Dendritic cell treated with granulocyte-macrophage colony-stimulating factor and Interleukin-4, amounts not matched to agents 40 ng/mL and 50 ng/mL, for 4 days (primary cell): ENCODE measurements at regions of chr11 and their contacts with region 1.

Region 1: DNA sequence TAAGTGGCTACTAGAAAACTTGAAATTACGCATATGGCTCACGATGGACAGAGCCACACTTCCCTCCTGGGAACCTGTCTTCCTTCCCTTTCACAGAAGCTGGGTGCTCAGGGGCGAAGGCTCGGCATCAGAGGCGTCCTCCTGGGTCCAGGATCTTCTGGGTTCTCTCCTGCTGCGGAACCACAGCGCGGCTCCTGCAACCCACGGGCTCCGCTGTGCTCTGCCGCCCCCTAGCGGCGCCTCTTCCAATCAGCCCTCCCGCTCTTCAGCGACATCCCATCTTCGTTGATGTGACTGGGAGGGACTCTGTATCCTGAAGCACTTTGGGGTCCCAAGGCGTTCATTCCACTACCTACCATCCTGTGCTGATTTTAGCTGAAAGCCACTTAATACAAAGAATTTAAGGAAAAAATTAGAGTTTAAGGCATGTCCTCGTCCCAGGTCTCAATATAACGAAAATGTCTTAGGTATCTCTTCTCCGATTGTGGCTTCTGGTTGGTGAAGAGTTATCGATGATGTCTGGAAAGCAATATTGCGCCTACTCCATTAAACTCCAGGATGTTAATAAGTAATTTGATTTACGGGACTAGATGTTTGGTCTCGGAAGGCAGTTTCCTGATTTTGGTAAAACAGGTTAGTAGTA is 14.8 kb upstream of the RPS3 start:
- H3K4me3 Mint-ChIP-seq: peak overlapping the region; percentile 55
- H3K27ac Mint-ChIP-seq: no peak overlapping the region
- H3K4me1 Mint-ChIP-seq: peaks cover 30% of the 10 kb centered on the region
- H3K27me3 Mint-ChIP-seq: peaks cover 2% of the 10 kb centered on the region

Region 2: GRCh38 chr11:75280227-75280701 is 104.3 kb before region 1 on chr11:
- intact Hi-C with region 1: loop called (anchors 1 kb)
- H3K4me3 Mint-ChIP-seq: no peak overlapping the region
- H3K27ac Mint-ChIP-seq: no peak overlapping the region
- H3K4me1 Mint-ChIP-seq: peaks cover 39% of the 10 kb centered on the region
- H3K27me3 Mint-ChIP-seq: no peaks in the 10 kb centered on the region

Region 3: DNA sequence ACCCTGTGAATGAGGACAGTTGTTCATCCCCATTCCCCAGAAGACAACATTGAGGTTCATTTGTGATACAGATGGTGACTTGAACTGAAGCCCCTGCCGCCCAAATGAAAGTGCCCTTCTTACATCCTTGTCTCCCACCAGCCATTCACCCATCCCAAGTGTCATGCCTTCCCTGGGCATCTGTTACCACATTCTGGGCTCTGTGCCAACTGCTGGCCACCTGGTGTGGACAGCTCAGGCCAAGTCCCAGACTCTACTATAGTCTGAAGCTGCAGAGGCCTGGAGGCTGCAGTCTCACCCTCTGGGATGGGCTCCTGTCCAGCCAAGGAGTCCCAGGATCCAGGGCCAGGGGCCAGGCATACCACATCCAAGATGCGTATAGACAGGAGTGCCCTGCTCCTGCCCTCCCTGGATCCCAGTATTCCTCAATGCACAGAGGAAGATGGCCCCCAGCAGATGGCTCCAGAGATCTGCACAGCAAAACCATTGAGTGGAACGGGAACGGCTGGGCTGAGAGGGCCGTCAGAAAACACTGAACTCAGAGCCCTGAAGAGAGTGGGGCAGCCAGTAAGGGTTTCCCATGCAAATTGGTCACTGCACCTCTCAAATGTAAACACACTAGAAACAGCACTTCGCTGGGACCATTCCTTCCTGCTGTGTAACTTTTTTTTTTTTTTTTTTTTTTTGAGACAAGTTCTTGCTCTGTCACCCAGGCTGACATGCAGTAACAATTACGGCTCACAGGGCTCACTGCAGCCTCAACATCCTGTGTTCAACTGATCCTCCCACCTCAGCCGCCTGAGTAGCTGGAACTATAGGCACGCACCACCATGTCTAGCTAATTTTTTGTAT is 55.9 kb before region 1 on chr11:
- intact Hi-C with region 1: loop called (anchors 1 kb)
- H3K4me3 Mint-ChIP-seq: peak overlapping the region; percentile 6
- H3K27ac Mint-ChIP-seq: peak overlapping the region; percentile 50
- H3K4me1 Mint-ChIP-seq: peaks cover 69% of the 10 kb centered on the region
- H3K27me3 Mint-ChIP-seq: no peaks in the 10 kb centered on the region

Region 4: DNA sequence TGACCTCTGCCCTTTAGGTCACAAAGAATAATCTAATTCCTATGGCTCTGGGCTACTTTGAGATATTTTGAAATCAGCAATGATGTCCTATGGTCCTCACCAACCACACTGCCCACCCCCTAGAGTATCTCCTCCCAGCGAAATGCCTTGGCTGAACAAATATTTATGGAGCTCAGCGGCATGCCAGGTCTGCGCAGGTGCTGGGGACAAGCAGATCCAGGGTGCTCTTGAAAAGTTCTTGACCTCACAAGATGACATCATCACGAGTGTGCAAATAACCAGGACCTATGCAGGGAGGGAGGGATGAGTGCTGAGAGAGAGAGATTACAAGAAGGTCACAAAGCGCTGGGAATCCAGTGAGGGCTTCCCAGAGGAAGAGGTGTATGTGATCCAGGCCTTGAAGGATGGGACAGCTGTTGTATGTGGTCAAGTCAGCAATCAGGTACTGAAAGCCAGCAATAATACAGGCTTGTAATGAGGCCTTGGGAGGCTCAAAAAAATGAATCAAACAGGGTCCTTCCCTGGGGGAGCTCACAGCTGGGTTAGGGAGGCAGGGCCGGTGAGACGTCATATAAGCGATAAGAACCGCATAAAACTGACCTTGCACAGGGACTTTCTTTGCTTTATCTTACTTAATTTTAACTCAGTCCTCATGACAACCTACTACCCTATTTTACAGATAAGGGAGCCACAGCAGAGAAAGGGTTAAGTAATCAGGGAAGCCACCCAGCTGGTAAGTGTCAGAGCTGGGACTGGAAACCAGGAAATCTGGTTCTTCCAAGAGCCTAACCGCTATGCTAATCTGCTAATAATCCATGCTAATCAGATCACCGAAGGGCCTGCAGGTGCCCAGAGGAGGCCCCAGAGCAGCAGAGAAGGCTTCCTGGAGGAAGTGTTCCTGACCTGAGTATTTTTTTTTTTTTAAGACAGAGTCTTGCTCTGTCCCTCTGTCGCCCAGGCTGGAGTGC is 41.4 kb before region 1 on chr11:
- intact Hi-C with region 1: loop called (anchors 5 kb)
- H3K4me3 Mint-ChIP-seq: peak overlapping the region; percentile 75
- H3K27ac Mint-ChIP-seq: peak overlapping the region; percentile 81
- H3K4me1 Mint-ChIP-seq: peaks cover 100% of the 10 kb centered on the region
- H3K27me3 Mint-ChIP-seq: no peaks in the 10 kb centered on the region

Region 5: GRCh38 chr11:75532200-75533048 is 147.9 kb after region 1 on chr11:
- intact Hi-C with region 1: loop called (anchors 2 kb)
- H3K4me3 Mint-ChIP-seq: no peak overlapping the region
- H3K27ac Mint-ChIP-seq: no peak overlapping the region
- H3K4me1 Mint-ChIP-seq: peaks cover 19% of the 10 kb centered on the region
- H3K27me3 Mint-ChIP-seq: peaks cover 29% of the 10 kb centered on the region

Region 6: GRCh38 chr11:75547580-75548058 is 163.1 kb after region 1 on chr11:
- intact Hi-C with region 1: no loop called
- H3K4me3 Mint-ChIP-seq: no peak overlapping the region
- H3K27ac Mint-ChIP-seq: peak overlapping the region; percentile 2
- H3K4me1 Mint-ChIP-seq: no peaks in the 10 kb centered on the region
- H3K27me3 Mint-ChIP-seq: peaks cover 8% of the 10 kb centered on the region